ENCODE measurements at regions of chr17 and their contacts with region 1.

Region 1: DNA sequence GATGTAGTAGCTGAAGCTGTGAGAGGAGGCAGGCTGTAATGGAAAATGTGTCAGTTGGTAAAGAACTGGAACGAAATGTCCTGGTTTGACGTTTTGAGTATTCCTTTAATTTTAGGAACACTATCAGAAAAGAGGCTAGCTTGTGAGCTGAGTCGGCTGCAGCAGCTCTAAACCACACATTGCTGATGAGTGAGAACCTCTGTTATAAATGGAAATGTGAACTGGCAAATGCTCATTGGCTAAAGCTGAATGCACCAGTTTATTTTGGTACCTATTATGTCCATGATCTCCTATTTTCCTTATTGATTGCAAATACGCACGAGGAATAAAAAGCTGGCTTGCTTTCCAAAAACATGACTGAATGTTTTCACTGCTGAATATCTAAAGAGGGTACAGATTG is 11.0 kb upstream of the WIPI1 start:
- DNase-seq: no peak
- H3K4me3 ChIP-seq: no peak overlapping the region
- H3K27ac ChIP-seq: no peak overlapping the region
- H3K4me1 ChIP-seq: no peaks in the 10 kb centered on the region
- H3K27me3 ChIP-seq: no peaks in the 10 kb centered on the region; the same call in 1 of the 2 replicates
- CTCF ChIP-seq: no peak
- EP300 ChIP-seq: no peak
- RAD21 ChIP-seq: no peak

Region 2: GRCh38 chr17:68319410-68320162 is 148.7 kb before region 1 on chr17:
- CTCF ChIA-PET with region 1: no interaction called
- POLR2A ChIA-PET with region 1: no interaction called
- DNase-seq: no peak
- H3K4me3 ChIP-seq: no peak overlapping the region
- H3K27ac ChIP-seq: no peak overlapping the region
- H3K4me1 ChIP-seq: no peaks in the 10 kb centered on the region
- H3K27me3 ChIP-seq: no peaks in the 10 kb centered on the region; the same call in 1 of the 2 replicates
- CTCF ChIP-seq: no peak
- EP300 ChIP-seq: no peak
- RAD21 ChIP-seq: no peak

Region 3: GRCh38 chr17:68457539-68458259 is 10.6 kb before region 1 on chr17:
- CTCF ChIA-PET with region 1: interaction called, 53 read pairs
- POLR2A ChIA-PET with region 1: no interaction called
- DNase-seq: peak; percentile 100
- H3K4me3 ChIP-seq: peak overlapping the region; percentile 77 to 93
- H3K27ac ChIP-seq: peak overlapping the region in 1 of 2 experiments; percentile 18; a peak in 1 of 4 replicates
- H3K4me1 ChIP-seq: peaks cover 8 to 23% of the 10 kb centered on the region in 2 experiments; a peak in 3 of 4 replicates
- H3K27me3 ChIP-seq: no peaks in the 10 kb centered on the region
- CTCF ChIP-seq: no peak
- EP300 ChIP-seq: no peak
- RAD21 ChIP-seq: no peak

Region 4: DNA sequence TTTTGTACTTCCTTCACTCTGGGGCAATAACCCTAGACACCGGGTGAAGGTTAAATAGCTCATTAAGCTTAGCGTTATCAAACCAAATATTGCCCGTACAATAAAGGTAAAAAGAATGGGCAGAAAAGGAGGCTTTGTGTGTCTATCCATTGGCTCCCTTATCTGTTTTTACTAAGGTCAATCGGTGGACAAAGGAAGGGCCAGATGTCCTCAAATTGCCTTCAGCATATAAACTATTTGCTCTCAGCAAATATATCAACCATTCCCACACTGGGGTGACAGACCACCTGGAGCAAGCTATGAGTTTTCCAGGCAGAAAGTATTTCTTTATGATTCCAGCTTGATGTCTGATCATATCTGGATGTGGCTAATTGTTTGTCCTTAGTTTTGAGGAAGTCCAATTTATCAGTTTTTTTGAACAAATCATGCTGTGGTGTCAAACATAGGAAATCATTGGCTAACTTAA is 14.3 kb after region 1 on chr17:
- CTCF ChIA-PET with region 1: interaction called, 24 read pairs
- POLR2A ChIA-PET with region 1: no interaction called
- DNase-seq: no peak
- H3K4me3 ChIP-seq: no peak overlapping the region
- H3K27ac ChIP-seq: no peak overlapping the region
- H3K4me1 ChIP-seq: no peaks in the 10 kb centered on the region
- H3K27me3 ChIP-seq: peaks cover 47% of the 10 kb centered on the region
- CTCF ChIP-seq: no peak
- EP300 ChIP-seq: no peak
- RAD21 ChIP-seq: no peak

Region 5: DNA sequence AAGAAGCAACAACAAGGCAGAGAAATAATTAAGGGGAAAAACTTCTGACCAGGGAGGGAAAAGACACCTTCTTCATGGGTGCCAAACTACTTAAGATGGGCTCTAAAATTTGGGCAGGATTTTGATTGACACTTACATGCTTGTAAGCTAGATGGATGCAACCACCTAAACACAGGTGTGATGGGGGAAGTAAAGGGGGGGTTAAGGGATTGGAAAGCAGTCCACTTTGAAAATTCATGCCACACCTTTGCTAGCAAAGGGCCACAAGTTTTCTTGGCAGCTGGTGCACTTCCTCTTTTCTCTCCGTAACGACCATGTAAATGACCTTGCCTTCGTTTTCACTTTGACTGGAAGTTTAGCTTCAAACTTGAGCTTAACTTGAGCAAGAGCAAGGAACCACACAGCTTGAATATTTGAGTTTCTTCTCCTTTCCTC is 29.6 kb after region 1 on chr17:
- CTCF ChIA-PET with region 1: interaction called, 21 read pairs
- POLR2A ChIA-PET with region 1: no interaction called
- DNase-seq: no peak
- H3K4me3 ChIP-seq: no peak overlapping the region
- H3K27ac ChIP-seq: no peak overlapping the region
- H3K4me1 ChIP-seq: peaks cover 0 to 6% of the 10 kb centered on the region in 2 experiments; a peak in 1 of 4 replicates
- H3K27me3 ChIP-seq: no peaks in the 10 kb centered on the region; the same call in 1 of the 2 replicates
- CTCF ChIP-seq: no peak
- EP300 ChIP-seq: no peak
- RAD21 ChIP-seq: no peak

Region 6: GRCh38 chr17:68843522-68843921 is 375.2 kb after region 1 on chr17:
- CTCF ChIA-PET with region 1: no interaction called
- POLR2A ChIA-PET with region 1: no interaction called
- DNase-seq: no peak
- H3K4me3 ChIP-seq: no peak overlapping the region
- H3K27ac ChIP-seq: no peak overlapping the region
- H3K4me1 ChIP-seq: no peaks in the 10 kb centered on the region
- H3K27me3 ChIP-seq: peaks cover 10% of the 10 kb centered on the region; the same call in 1 of the 2 replicates
- CTCF ChIP-seq: no peak
- EP300 ChIP-seq: no peak
- RAD21 ChIP-seq: no peak

Measured in SK-N-SH (cell line).